ENCODE measurements at regions of chr13 and their contacts with region 1.

Region 1: GRCh38 chr13:77697217-77698103 is at the start of gene SLAIN1:
- DNase-seq: peak; percentile 69 to 93 (median 82)
- ATAC-seq: peak; percentile 75
- H3K4me3 ChIP-seq: peak within 1 kb of the TSS; percentile 78
- H3K4me3 Mint-ChIP-seq: peak within 1 kb of the TSS; percentile 100
- H3K27ac ChIP-seq: peak within 1 kb of the TSS; percentile 71 to 72
- H3K27ac Mint-ChIP-seq: peak within 1 kb of the TSS; percentile 82
- H3K4me1 ChIP-seq: peaks cover 15% of the 10 kb centered on the region
- H3K4me1 Mint-ChIP-seq: peaks cover 50% of the 10 kb centered on the region
- H3K27me3 ChIP-seq: no peaks in the 10 kb centered on the region
- H3K27me3 Mint-ChIP-seq: no peaks in the 10 kb centered on the region
- CTCF ChIP-seq: no peak
- total RNA-seq, gene SLAIN1: 41.2 to 42.5 TPM

Region 2: GRCh38 chr13:76886292-76887075 is 811.0 kb before region 1 on chr13 and contains the start of gene KCTD12:
- CTCF ChIA-PET with region 1: interaction called, 3 read pairs
- POLR2A ChIA-PET with region 1: interaction called, 3 read pairs
- intact Hi-C with region 1: loop called in 1 of 2 experiments (anchors 5 kb)
- DNase-seq: peak; percentile 54 to 91 (median 72)
- ATAC-seq: peak; percentile 76
- H3K4me3 ChIP-seq: peak within 1 kb of the TSS; percentile 85
- H3K4me3 Mint-ChIP-seq: peak within 1 kb of the TSS; percentile 91
- H3K27ac ChIP-seq: peak within 1 kb of the TSS in 1 of 2 donors; percentile 24
- H3K27ac Mint-ChIP-seq: peak within 1 kb of the TSS; percentile 82
- H3K4me1 ChIP-seq: peaks cover 28% of the 10 kb centered on the region
- H3K4me1 Mint-ChIP-seq: peaks cover 38% of the 10 kb centered on the region
- H3K27me3 ChIP-seq: peaks cover 0 to 3% of the 10 kb centered on the region in 2 experiments
- H3K27me3 Mint-ChIP-seq: peaks cover 7% of the 10 kb centered on the region
- CTCF ChIP-seq: no peak
- total RNA-seq, gene KCTD12: 4.8 to 4.9 TPM

Region 3: GRCh38 chr13:76991796-76992547 is 705.5 kb before region 1 on chr13 and contains the start of gene CLN5:
- CTCF ChIA-PET with region 1: no interaction called
- POLR2A ChIA-PET with region 1: interaction called, 8 read pairs
- intact Hi-C with region 1: loop called in 1 of 2 experiments (anchors 5 kb)
- DNase-seq: peak; percentile 89 to 99 (median 95)
- ATAC-seq: peak; percentile 85
- H3K4me3 ChIP-seq: peak within 1 kb of the TSS; percentile 72
- H3K4me3 Mint-ChIP-seq: peak within 1 kb of the TSS; percentile 97
- H3K27ac ChIP-seq: peak within 1 kb of the TSS; percentile 89 to 95
- H3K27ac Mint-ChIP-seq: peak within 1 kb of the TSS; percentile 99
- H3K4me1 ChIP-seq: peaks cover 30% of the 10 kb centered on the region
- H3K4me1 Mint-ChIP-seq: peaks cover 60% of the 10 kb centered on the region
- H3K27me3 ChIP-seq: no peaks in the 10 kb centered on the region
- H3K27me3 Mint-ChIP-seq: no peaks in the 10 kb centered on the region
- CTCF ChIP-seq: no peak
- total RNA-seq, gene CLN5: 37.4 to 42.9 TPM

Region 4: GRCh38 chr13:77323858-77324257 is 373.6 kb before region 1 on chr13:
- CTCF ChIA-PET with region 1: no interaction called
- POLR2A ChIA-PET with region 1: interaction called, 53 read pairs
- intact Hi-C with region 1: loop called (anchors 1 to 5 kb)
- DNase-seq: peak in 1 of 14 experiments; percentile 38
- ATAC-seq: no peak
- H3K4me3 ChIP-seq: no peak overlapping the region
- H3K4me3 Mint-ChIP-seq: peak overlapping the region; percentile 98
- H3K27ac ChIP-seq: no peak overlapping the region
- H3K27ac Mint-ChIP-seq: peak overlapping the region; percentile 91
- H3K4me1 ChIP-seq: peaks cover 36% of the 10 kb centered on the region
- H3K4me1 Mint-ChIP-seq: peaks cover 91% of the 10 kb centered on the region
- H3K27me3 ChIP-seq: no peaks in the 10 kb centered on the region
- H3K27me3 Mint-ChIP-seq: no peaks in the 10 kb centered on the region
- CTCF ChIP-seq: no peak

Region 5: GRCh38 chr13:77637588-77637987 is 59.9 kb before region 1 on chr13:
- CTCF ChIA-PET with region 1: no interaction called
- POLR2A ChIA-PET with region 1: no interaction called
- intact Hi-C with region 1: no loop called
- DNase-seq: no peak
- ATAC-seq: no peak
- H3K4me3 ChIP-seq: no peak overlapping the region
- H3K4me3 Mint-ChIP-seq: no peak overlapping the region
- H3K27ac ChIP-seq: no peak overlapping the region
- H3K27ac Mint-ChIP-seq: no peak overlapping the region
- H3K4me1 ChIP-seq: no peaks in the 10 kb centered on the region
- H3K4me1 Mint-ChIP-seq: no peaks in the 10 kb centered on the region
- H3K27me3 ChIP-seq: no peaks in the 10 kb centered on the region
- H3K27me3 Mint-ChIP-seq: peaks cover 5% of the 10 kb centered on the region
- CTCF ChIP-seq: no peak

Region 6: GRCh38 chr13:77751513-77752456 is 54.3 kb after region 1 on chr13:
- CTCF ChIA-PET with region 1: no interaction called
- POLR2A ChIA-PET with region 1: interaction called, 3 read pairs
- intact Hi-C with region 1: loop called in 1 of 2 experiments (anchors 5 kb)
- DNase-seq: peak in 11 of 14 experiments; percentile 13 to 77 (median 22)
- ATAC-seq: peak; percentile 92
- H3K4me3 ChIP-seq: no peak overlapping the region
- H3K4me3 Mint-ChIP-seq: no peak overlapping the region
- H3K27ac ChIP-seq: no peak overlapping the region
- H3K27ac Mint-ChIP-seq: peak overlapping the region; percentile 3
- H3K4me1 ChIP-seq: no peaks in the 10 kb centered on the region
- H3K4me1 Mint-ChIP-seq: peaks cover 32% of the 10 kb centered on the region
- H3K27me3 ChIP-seq: no peaks in the 10 kb centered on the region
- H3K27me3 Mint-ChIP-seq: no peaks in the 10 kb centered on the region
- CTCF ChIP-seq: peak; percentile 89

Region 7: GRCh38 chr13:77868714-77869113 is 171.3 kb after region 1 on chr13:
- CTCF ChIA-PET with region 1: no interaction called
- POLR2A ChIA-PET with region 1: no interaction called
- intact Hi-C with region 1: no loop called
- DNase-seq: no peak
- ATAC-seq: no peak
- H3K4me3 ChIP-seq: no peak overlapping the region
- H3K4me3 Mint-ChIP-seq: no peak overlapping the region
- H3K27ac ChIP-seq: no peak overlapping the region
- H3K27ac Mint-ChIP-seq: no peak overlapping the region
- H3K4me1 ChIP-seq: no peaks in the 10 kb centered on the region
- H3K4me1 Mint-ChIP-seq: no peaks in the 10 kb centered on the region
- H3K27me3 ChIP-seq: no peaks in the 10 kb centered on the region
- H3K27me3 Mint-ChIP-seq: peaks cover 7% of the 10 kb centered on the region
- CTCF ChIP-seq: no peak

Region 8: DNA sequence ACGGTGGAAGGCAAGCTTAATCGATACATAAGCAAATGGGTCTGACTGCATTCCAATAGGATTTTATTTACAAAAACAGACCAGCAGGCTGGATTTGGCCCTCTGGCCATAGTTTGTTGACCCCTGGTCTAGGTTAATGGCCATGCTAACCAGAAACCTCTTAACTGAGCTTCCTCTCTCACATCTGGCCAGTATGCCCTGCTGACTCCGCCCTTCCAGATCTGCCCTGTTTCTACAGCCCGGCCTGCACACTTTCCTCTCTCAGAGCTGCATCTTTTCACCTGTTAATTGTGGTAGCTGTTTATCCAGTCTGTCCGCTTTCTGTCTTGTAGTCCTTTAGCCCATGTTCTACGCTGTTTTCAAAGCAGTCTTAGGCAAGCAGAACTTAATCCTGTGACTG is 195.6 kb after region 1 on chr13:
- CTCF ChIA-PET with region 1: no interaction called
- POLR2A ChIA-PET with region 1: no interaction called
- intact Hi-C with region 1: no loop called
- DNase-seq: no peak
- ATAC-seq: no peak
- H3K4me3 ChIP-seq: no peak overlapping the region
- H3K4me3 Mint-ChIP-seq: no peak overlapping the region
- H3K27ac ChIP-seq: no peak overlapping the region
- H3K27ac Mint-ChIP-seq: no peak overlapping the region
- H3K4me1 ChIP-seq: no peaks in the 10 kb centered on the region
- H3K4me1 Mint-ChIP-seq: no peaks in the 10 kb centered on the region
- H3K27me3 ChIP-seq: no peaks in the 10 kb centered on the region
- H3K27me3 Mint-ChIP-seq: no peaks in the 10 kb centered on the region
- CTCF ChIP-seq: no peak

Region 9: GRCh38 chr13:77980592-77980991 is 283.1 kb after region 1 on chr13:
- CTCF ChIA-PET with region 1: no interaction called
- POLR2A ChIA-PET with region 1: no interaction called
- intact Hi-C with region 1: no loop called
- DNase-seq: no peak
- ATAC-seq: no peak
- H3K4me3 ChIP-seq: no peak overlapping the region
- H3K4me3 Mint-ChIP-seq: no peak overlapping the region
- H3K27ac ChIP-seq: no peak overlapping the region
- H3K27ac Mint-ChIP-seq: no peak overlapping the region
- H3K4me1 ChIP-seq: no peaks in the 10 kb centered on the region
- H3K4me1 Mint-ChIP-seq: no peaks in the 10 kb centered on the region
- H3K27me3 ChIP-seq: no peaks in the 10 kb centered on the region
- H3K27me3 Mint-ChIP-seq: no peaks in the 10 kb centered on the region
- CTCF ChIP-seq: no peak

Region 10: DNA sequence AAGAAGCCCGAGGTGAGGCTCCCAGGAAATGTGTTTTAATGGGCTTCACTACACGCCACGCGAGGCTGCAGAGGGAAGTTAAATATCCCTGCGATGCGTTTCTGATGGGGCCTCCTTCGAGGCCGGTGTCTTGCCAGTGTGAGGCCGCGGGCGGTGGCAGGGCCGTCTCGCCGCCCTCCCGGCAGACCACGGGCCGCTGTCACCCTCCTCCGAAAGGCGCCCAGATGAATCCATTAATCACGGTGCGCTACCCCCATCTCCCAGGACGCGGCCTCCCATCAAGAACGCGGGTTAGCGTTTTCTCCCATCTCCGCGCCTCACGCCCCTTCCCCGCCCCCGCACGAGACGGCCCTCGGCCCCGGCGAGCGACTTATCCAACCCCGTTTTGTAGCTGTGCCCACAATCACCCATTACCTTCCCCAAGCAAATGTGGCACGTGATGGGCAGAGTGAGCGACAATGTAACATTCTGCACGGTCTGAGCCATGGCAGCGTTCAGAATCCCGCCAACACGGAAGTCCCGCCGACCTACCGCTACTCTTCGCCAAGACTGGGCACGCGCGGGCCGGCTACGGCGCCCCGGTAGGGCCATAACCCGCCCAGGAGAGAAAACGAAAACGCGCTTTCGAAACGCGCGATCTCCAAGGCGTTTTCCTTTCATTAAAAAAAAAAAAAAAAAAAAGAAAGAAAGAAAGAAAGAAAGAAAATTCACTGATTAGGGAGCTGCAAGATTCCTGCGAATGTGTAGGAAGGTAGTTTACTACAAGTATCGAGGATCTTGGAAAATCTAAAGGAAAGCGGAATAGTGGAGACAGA is 961.4 kb after region 1 on chr13 and contains the start of gene OBI1:
- CTCF ChIA-PET with region 1: no interaction called
- POLR2A ChIA-PET with region 1: no interaction called
- intact Hi-C with region 1: loop called in 1 of 2 experiments (anchors 10 kb)
- DNase-seq: peak; percentile 83 to 94 (median 87)
- ATAC-seq: peak; percentile 94
- H3K4me3 ChIP-seq: peak within 1 kb of the TSS; percentile 96
- H3K4me3 Mint-ChIP-seq: peak within 1 kb of the TSS; percentile 98
- H3K27ac ChIP-seq: peak within 1 kb of the TSS in 1 of 2 donors; percentile 56
- H3K27ac Mint-ChIP-seq: peak within 1 kb of the TSS; percentile 91
- H3K4me1 ChIP-seq: peaks cover 14% of the 10 kb centered on the region
- H3K4me1 Mint-ChIP-seq: peaks cover 43% of the 10 kb centered on the region
- H3K27me3 ChIP-seq: no peaks in the 10 kb centered on the region
- H3K27me3 Mint-ChIP-seq: no peaks in the 10 kb centered on the region
- CTCF ChIP-seq: no peak
- total RNA-seq, gene OBI1: 2.6 TPM

Region 11: DNA sequence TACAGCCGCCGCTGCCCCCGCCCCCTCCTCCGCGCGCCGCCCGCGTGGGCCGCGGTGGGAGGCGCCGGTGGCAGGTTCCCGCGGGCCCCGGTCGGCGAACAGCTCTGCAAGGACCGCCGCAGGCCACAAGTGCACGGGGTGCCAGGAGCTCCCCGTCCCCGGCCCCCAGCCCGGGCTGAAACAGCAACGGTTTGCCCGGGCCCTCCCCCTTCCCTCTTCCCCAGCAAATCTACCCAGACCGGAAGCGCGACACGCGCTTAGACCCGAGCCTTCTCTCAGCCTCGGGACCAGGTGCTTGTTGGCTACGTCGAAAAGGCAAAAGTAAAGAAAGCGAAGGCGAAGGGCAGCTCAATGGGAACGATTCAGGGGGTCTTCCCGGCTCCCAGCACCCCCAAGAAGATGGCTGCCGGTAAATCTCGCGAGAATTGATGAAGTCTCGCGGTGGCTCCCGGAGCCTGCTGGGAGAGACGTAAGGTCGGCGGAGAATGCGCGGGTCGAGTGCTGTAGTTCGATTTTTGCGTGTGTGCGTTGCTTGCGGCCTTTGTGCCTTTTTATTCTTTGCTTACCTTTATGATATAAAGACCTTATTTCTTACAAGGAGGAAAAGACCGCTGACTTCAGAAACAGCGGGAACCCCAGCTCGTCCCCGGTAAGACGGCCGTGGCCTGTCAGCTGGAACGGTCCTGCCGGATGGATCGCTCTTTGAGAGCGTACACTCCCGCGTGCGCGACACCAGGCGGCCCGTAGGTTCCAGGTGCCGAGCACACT is 1708.6 kb after region 1 on chr13 and contains the start of gene RBM26:
- CTCF ChIA-PET with region 1: no interaction called
- POLR2A ChIA-PET with region 1: no interaction called
- intact Hi-C with region 1: loop called in 1 of 2 experiments (anchors 10 kb)
- DNase-seq: peak; percentile 87 to 97 (median 92)
- ATAC-seq: peak; percentile 86
- H3K4me3 ChIP-seq: peak within 1 kb of the TSS; percentile 68
- H3K4me3 Mint-ChIP-seq: peak within 1 kb of the TSS; percentile 95
- H3K27ac ChIP-seq: peak within 1 kb of the TSS; percentile 93 to 95
- H3K27ac Mint-ChIP-seq: no peak within 1 kb of the TSS
- H3K4me1 ChIP-seq: peaks cover 21% of the 10 kb centered on the region
- H3K4me1 Mint-ChIP-seq: peaks cover 44% of the 10 kb centered on the region
- H3K27me3 ChIP-seq: no peaks in the 10 kb centered on the region
- H3K27me3 Mint-ChIP-seq: no peaks in the 10 kb centered on the region
- CTCF ChIP-seq: no peak
- total RNA-seq, gene RBM26: 67.3 to 68.0 TPM

Measured in CD4-positive, alpha-beta T cell (primary cell).